Activated T-helper 2 cell treated with anti-CD3 and anti-CD28 coated beads, Interferon-gamma antibody, Interleukin-2, Interleukin-4, amounts not matched to agents 10 μg/mL and 5 μg/mL and 100 μg/mL, durations not matched to agents 14 hours and 24 hours and 36 hours (primary cell): ENCODE measurements at regions of chr5 and their contacts with region 1.

Region 1: DNA sequence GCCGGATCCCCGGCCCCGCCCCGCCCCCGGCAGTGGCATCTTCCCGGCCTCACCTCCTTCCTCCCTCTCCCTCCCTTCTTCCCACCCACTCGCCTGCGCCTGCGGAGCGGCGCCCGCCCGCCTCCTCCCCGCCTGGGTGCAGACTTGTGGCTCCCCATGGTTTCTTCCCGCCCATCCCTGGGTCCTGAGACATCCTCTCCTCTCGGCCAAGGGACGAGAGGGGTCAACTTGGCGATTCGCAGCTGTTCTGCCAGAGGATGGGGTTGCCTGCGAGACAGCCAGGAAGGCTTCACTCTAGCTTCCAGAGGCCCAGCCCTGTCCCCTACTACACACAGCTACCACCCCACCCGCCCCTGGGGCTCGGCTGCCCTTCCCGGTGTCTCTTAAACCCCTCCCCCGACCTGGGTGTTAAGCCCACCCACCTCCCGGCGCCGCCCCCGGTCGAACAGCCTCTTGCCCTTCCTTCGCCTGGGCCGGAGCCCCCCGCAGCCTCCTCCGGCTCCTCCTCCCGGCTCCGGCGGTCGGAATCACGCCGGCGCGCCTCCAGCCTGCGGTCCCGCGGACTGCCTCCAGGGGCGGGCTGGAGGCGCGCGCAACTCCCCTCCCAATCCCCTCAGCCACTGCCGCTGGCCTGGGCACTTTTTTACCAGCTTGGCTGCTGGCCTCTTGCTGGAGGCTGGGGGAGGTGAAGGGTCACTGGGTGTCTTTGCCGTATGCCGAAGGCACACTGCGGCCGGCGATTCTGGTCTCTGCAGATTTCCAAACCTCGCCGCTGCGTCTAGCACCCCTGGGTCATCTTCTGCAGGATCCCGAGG is 1.9 kb downstream of the JADE2 start:
- DNase-seq: peak; percentile 61
- H3K4me3 Mint-ChIP-seq: peak overlapping the region; percentile 97
- H3K27ac Mint-ChIP-seq: peak overlapping the region; percentile 94
- H3K4me1 Mint-ChIP-seq: peaks cover 25% of the 10 kb centered on the region
- H3K27me3 Mint-ChIP-seq: no peaks in the 10 kb centered on the region

Region 2: DNA sequence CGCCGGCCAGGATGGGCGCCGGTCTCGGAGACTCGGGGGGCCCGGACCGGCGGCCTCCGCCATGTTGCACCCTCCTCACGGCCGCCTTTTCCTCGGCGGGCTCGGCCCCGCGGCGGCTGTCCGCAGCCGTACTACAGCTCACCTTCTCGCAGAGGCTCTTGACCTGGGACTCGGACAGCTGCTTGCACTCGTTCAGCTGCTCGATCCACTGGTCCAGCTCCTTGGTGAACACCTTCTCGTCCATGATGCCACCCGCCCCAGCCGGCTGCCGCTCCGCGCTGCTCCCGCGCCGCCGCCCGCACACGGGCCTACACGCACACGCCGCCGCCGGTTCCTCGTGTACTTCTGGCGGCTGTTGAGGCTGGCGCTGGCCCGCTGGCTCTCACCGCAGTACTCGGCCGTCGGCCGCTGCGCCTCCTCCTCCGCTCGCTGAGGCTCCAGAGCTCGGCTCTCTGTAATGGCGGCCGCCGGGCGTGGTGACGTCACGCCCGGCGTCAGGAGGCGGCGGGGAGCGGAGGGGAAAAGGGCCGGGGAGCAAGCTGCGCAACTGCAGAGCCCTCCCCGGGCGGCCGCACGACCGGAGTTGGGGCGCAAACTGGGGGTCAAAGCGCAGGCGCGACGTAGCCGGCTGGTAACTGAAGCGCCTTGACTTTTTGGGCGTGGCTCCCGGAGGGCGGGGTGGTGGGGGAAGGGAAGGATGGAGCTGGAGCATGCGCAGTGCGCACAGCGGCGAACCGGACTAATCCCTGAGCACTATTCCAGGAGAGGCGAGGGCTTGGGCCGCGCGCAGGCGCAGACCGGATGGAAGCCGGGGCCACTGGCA is 301.5 kb before region 1 on chr5 and contains the start of gene PPP2CA:
- intact Hi-C with region 1: loop called (anchors 5 kb)
- DNase-seq: peak; percentile 100
- H3K4me3 Mint-ChIP-seq: peak within 1 kb of the TSS; percentile 89
- H3K27ac Mint-ChIP-seq: peak within 1 kb of the TSS; percentile 98
- H3K4me1 Mint-ChIP-seq: peaks cover 38% of the 10 kb centered on the region
- H3K27me3 Mint-ChIP-seq: no peaks in the 10 kb centered on the region
- total RNA-seq, gene PPP2CA: 171 and 179 TPM in 2 replicates

Region 3: DNA sequence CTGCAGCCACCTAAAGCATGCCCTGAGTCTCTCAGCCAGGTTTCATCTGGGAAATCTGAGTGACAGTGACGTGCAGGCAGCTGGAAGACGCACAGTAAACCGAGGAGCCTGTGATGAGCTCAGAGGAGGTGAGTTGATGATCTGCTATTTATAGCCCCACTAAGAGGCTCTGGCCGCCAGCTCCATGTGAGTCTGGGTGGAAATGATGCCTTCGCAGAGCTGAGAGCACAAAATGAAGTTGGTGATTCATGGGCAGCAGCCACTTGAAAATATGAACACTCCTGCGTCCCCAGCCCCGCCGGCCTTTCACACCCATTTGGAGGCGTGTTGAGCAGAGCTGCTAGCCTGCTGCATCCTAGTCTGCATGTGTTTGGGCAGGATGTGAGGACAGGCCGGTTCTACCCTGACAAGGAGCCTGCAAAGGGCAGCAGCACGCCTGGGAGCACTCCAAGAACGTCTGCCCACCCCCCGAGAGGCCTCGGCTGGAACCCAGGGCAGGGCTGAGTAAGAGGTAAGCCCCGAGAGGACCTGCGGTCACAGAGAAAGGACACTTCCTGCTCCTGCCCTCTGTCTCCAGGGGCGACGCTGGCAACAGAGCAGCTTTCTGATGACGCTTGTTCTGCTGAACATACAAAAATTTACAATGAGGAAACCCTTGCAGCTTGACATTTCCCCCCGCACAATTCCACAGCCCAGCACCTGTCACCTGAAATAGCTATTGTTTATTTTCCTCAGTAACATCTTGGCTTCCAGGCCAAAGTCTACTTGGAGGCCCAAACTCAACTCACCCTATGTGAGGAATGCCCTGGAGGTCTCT is 90.6 kb before region 1 on chr5:
- intact Hi-C with region 1: loop called (anchors 1 kb)
- DNase-seq: peak; percentile 62
- H3K4me3 Mint-ChIP-seq: no peak overlapping the region
- H3K27ac Mint-ChIP-seq: peak overlapping the region; percentile 68
- H3K4me1 Mint-ChIP-seq: peaks cover 19% of the 10 kb centered on the region
- H3K27me3 Mint-ChIP-seq: no peaks in the 10 kb centered on the region

Region 4: GRCh38 chr5:134511788-134512650 is 15.3 kb before region 1 on chr5:
- intact Hi-C with region 1: loop called (anchors 1 kb)
- DNase-seq: no peak
- H3K4me3 Mint-ChIP-seq: no peak overlapping the region
- H3K27ac Mint-ChIP-seq: peak overlapping the region; percentile 78
- H3K4me1 Mint-ChIP-seq: peaks cover 36% of the 10 kb centered on the region
- H3K27me3 Mint-ChIP-seq: no peaks in the 10 kb centered on the region

Region 5: GRCh38 chr5:134577796-134578363 is 50.5 kb after region 1 on chr5:
- intact Hi-C with region 1: loop called (anchors 5 kb)
- DNase-seq: peak; percentile 63
- H3K4me3 Mint-ChIP-seq: no peak overlapping the region
- H3K27ac Mint-ChIP-seq: no peak overlapping the region
- H3K4me1 Mint-ChIP-seq: peaks cover 4% of the 10 kb centered on the region
- H3K27me3 Mint-ChIP-seq: no peaks in the 10 kb centered on the region